GM12878 (cell line): ENCODE measurements at regions of chr7 and their contacts with region 1.

Region 1: DNA sequence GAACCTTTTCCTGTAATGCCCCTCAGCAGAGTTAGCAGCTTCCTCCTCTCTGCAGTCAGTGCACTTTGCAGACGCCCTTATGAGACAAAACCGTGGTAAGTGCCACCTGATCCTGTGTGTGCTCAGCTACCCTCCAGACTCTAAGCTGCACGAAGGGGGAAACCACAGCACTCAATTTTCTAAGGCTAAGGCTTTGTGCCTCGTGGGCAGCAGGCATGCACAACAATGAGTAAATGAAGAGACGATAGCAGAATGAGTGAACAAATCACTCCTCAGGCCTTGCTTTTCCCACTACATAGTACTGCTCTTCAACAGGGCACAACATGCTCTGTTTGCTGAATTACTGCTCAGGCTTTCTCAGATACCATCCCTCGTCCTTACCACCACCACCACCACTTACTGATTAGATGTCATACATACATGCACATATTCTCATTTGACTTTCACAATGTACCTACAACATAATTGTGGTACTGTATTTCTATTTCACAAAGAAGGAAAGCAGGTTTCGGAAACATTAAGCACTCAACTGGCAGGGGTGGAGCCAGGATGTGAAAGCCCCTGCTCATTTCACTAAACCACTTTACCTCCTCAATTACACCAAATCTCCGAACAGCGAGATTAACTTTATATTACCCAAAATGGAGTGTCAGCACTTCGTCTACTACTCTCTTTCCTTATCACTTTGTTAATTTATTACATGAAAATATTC is 85.4 kb downstream of the ICA1 start:
- DNase-seq: peak; percentile 96
- ATAC-seq: peak; percentile 82
- H3K4me3 ChIP-seq: peak overlapping the region; percentile 8
- H3K27ac ChIP-seq: peak overlapping the region; percentile 98
- H3K4me1 ChIP-seq: peaks cover 39% of the 10 kb centered on the region
- H3K27me3 ChIP-seq: no peaks in the 10 kb centered on the region
- CTCF ChIP-seq: no peak
- EP300 ChIP-seq: peak; percentile 22 to 52; a peak in 2 of 4 replicates
- POLR2A ChIP-seq: peak; percentile 62
- RAD21 ChIP-seq: 0 out of 2 replicates have a peak, but pooled peaks have one; percentile 3

Region 2: GRCh38 chr7:7977774-7978173 is 198.8 kb before region 1 on chr7:
- CTCF ChIA-PET with region 1: interaction called, 6 read pairs
- POLR2A ChIA-PET with region 1: interaction called, 3 read pairs
- RAD21 ChIA-PET with region 1: interaction called, 40 read pairs
- SMC1A ChIA-PET with region 1: interaction called, 32 read pairs
- in situ Hi-C with region 1: no loop called
- intact Hi-C with region 1: no loop called
- DNase-seq: no peak
- ATAC-seq: peak; percentile 4
- H3K4me3 ChIP-seq: peak overlapping the region; percentile 47; the same call in 1 of the 2 replicates
- H3K27ac ChIP-seq: peak overlapping the region; percentile 30; the same call in 1 of the 2 replicates
- H3K4me1 ChIP-seq: peaks cover 4% of the 10 kb centered on the region; the same call in 1 of the 2 replicates
- H3K27me3 ChIP-seq: no peaks in the 10 kb centered on the region
- CTCF ChIP-seq: no peak
- EP300 ChIP-seq: no peak
- POLR2A ChIP-seq: no peak
- RAD21 ChIP-seq: no peak

Region 3: GRCh38 chr7:8125680-8126444 is 50.7 kb before region 1 on chr7:
- CTCF ChIA-PET with region 1: interaction called, 12 read pairs
- POLR2A ChIA-PET with region 1: interaction called, 6 read pairs
- RAD21 ChIA-PET with region 1: interaction called, 9 read pairs
- SMC1A ChIA-PET with region 1: interaction called, 8 read pairs
- in situ Hi-C with region 1: no loop called
- intact Hi-C with region 1: no loop called
- DNase-seq: peak; percentile 95
- ATAC-seq: peak; percentile 80
- H3K4me3 ChIP-seq: no peak overlapping the region; the same call in 1 of the 2 replicates
- H3K27ac ChIP-seq: peak overlapping the region; percentile 90
- H3K4me1 ChIP-seq: peaks cover 68% of the 10 kb centered on the region
- H3K27me3 ChIP-seq: no peaks in the 10 kb centered on the region
- CTCF ChIP-seq: no peak
- EP300 ChIP-seq: peak; percentile 66 to 81
- POLR2A ChIP-seq: peak; percentile 74
- RAD21 ChIP-seq: peak; percentile 25

Region 4: GRCh38 chr7:8143151-8143874 is 33.2 kb before region 1 on chr7:
- CTCF ChIA-PET with region 1: interaction called, 9 read pairs
- POLR2A ChIA-PET with region 1: interaction called, 4 read pairs
- RAD21 ChIA-PET with region 1: interaction called, 17 read pairs
- SMC1A ChIA-PET with region 1: interaction called, 16 read pairs
- in situ Hi-C with region 1: no loop called
- intact Hi-C with region 1: no loop called
- DNase-seq: no peak
- ATAC-seq: peak; percentile 86
- H3K4me3 ChIP-seq: no peak overlapping the region
- H3K27ac ChIP-seq: peak overlapping the region; percentile 55
- H3K4me1 ChIP-seq: peaks cover 12% of the 10 kb centered on the region
- H3K27me3 ChIP-seq: no peaks in the 10 kb centered on the region
- CTCF ChIP-seq: no peak
- EP300 ChIP-seq: no peak
- POLR2A ChIP-seq: no peak
- RAD21 ChIP-seq: 0 out of 2 replicates have a peak, but pooled peaks have one; percentile 3

Region 5: GRCh38 chr7:8161364-8161828 is 15.1 kb before region 1 on chr7:
- CTCF ChIA-PET with region 1: interaction called, 5 read pairs
- POLR2A ChIA-PET with region 1: interaction called, 3 read pairs
- RAD21 ChIA-PET with region 1: interaction called, 3 read pairs
- SMC1A ChIA-PET with region 1: interaction called, 11 read pairs
- in situ Hi-C with region 1: no loop called
- intact Hi-C with region 1: no loop called
- DNase-seq: no peak
- ATAC-seq: peak; percentile 71
- H3K4me3 ChIP-seq: no peak overlapping the region
- H3K27ac ChIP-seq: no peak overlapping the region
- H3K4me1 ChIP-seq: no peaks in the 10 kb centered on the region
- H3K27me3 ChIP-seq: no peaks in the 10 kb centered on the region
- CTCF ChIP-seq: no peak
- EP300 ChIP-seq: no peak
- POLR2A ChIP-seq: no peak
- RAD21 ChIP-seq: no peak

Region 6: DNA sequence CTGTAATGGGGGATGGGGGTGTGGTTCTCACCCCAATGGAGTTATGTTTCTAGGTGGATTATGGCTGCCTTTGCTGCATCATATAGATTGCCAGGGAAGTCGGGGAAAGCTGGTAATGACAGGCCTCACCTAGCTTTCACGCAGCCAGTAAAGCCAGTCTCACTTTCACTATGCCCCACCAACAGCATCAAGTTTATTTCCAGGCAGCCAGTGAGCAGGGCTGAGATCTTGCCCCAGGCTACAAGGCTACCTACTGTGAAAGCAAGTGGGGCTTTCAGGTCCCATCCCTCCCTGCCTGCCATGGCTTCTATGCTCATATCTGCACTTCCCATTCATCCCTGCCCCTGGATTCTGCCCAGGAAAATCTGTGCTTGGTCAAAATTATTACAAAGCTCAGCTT is 195.2 kb after region 1 on chr7:
- CTCF ChIA-PET with region 1: no interaction called
- POLR2A ChIA-PET with region 1: no interaction called
- RAD21 ChIA-PET with region 1: no interaction called
- SMC1A ChIA-PET with region 1: no interaction called
- in situ Hi-C with region 1: no loop called
- intact Hi-C with region 1: no loop called
- DNase-seq: no peak
- ATAC-seq: peak; percentile 79
- H3K4me3 ChIP-seq: no peak overlapping the region
- H3K27ac ChIP-seq: no peak overlapping the region
- H3K4me1 ChIP-seq: no peaks in the 10 kb centered on the region
- H3K27me3 ChIP-seq: no peaks in the 10 kb centered on the region
- CTCF ChIP-seq: no peak
- EP300 ChIP-seq: no peak
- POLR2A ChIP-seq: no peak
- RAD21 ChIP-seq: no peak

Region 7: GRCh38 chr7:8389593-8390261 is 213.2 kb after region 1 on chr7:
- CTCF ChIA-PET with region 1: no interaction called
- POLR2A ChIA-PET with region 1: no interaction called
- RAD21 ChIA-PET with region 1: no interaction called
- SMC1A ChIA-PET with region 1: no interaction called
- in situ Hi-C with region 1: no loop called
- intact Hi-C with region 1: no loop called
- DNase-seq: no peak
- ATAC-seq: no peak
- H3K4me3 ChIP-seq: no peak overlapping the region
- H3K27ac ChIP-seq: no peak overlapping the region
- H3K4me1 ChIP-seq: peaks cover 21% of the 10 kb centered on the region
- H3K27me3 ChIP-seq: no peaks in the 10 kb centered on the region; a peak in 1 of 4 replicates
- CTCF ChIP-seq: no peak
- EP300 ChIP-seq: no peak
- POLR2A ChIP-seq: no peak
- RAD21 ChIP-seq: no peak